PC-9 (cell line): ENCODE measurements at regions of chr1 and their contacts with region 1.

Region 1: DNA sequence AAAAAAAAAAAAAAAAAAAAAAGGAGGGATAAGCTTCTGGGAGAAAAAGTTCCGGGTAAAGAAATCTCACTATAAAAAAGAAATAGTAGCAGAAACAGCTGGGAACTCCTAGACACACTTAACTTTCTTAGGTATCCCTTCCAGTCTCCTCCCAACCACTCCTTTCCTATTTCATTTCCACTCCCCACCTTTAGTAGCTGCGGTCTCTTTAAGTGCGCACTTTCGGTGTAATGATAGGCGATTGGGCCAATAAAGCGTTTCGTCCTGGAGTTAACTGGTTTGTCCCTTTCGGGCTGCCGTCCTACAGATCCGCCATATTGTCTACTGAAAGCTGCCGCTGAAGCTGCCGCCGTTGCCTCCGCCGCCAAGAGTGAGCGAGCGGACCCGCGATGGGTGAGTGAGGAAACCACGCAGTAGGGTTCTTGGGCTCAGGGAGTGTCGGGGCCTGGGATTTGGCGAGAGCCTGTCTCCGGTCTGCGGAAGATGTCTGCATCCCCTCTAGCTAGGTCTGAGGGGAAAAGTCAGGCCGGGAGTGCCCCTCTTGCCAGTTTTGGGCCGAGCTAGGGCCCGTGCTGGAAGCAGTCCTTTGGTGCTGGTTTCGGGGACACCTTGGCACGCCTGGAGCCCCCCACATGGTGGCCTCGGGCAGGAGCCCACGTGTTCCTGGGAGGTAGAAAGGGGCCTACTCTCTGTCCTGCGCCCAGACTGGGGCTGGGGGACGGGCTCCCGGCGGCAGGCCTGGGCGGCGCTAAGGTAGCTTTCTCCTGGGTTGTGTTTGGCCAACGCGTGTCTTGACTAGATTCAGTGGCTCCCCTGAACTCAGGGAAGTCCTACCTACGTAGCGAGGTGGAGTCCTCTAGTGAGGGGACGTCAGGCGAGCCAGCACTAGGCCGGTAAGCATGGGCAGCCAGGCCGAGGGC is at the start of gene KPNA6:
- DNase-seq: peak; percentile 87 to 91
- H3K4me3 ChIP-seq: peak within 1 kb of the TSS; percentile 82
- H3K27ac ChIP-seq: peak within 1 kb of the TSS; percentile 81
- H3K4me1 ChIP-seq: 0 out of 2 replicates have a peak, but pooled peaks cover 5% of the 10 kb centered on the region
- H3K27me3 ChIP-seq: no peaks in the 10 kb centered on the region
- CTCF ChIP-seq: no peak
- total RNA-seq, gene KPNA6: 76.0 and 89.9 TPM in 2 replicates

Region 2: DNA sequence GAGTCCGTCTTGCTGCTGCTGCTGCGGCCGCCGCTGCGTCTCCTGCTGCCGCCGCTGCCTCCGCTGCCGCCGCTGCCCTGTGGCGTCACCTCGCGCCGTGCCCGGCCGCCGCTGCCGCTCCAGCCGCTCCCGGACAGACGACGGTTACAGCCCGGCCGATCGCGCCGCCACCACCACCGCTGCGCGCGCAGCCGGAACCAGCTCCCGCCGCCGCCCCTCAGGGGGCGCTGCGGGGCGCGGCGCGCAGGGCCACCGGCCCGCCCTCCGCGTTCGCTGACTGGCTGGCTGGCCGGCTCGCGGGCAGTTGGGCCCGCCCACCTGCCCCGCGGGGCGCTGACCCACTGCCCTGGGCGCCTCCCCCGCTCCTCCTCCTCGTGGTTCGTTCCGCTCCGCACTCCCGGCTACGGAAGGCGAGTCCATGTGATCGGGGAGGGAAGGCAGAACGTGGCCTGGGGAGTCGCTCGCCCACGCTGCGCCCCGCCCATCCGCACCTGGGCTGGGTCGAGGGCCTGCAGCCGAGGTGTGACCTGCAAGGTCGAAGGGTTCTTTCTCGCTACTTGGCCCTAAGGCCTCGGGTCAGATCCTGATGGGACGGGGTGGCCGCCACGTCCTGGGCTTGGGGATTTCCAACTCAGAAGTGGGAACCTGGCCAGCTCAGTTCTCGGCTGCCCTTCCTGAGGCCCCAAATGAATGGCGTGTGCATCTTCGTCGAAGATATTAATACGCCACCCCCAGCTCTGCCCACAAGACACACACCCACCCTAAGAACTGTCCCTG is 169.6 kb before region 1 on chr1 and contains the start of gene PTP4A2:
- CTCF ChIA-PET with region 1: interaction called, 3 read pairs
- POLR2A ChIA-PET with region 1: interaction called, 12 read pairs
- intact Hi-C with region 1: no loop called
- DNase-seq: peak; percentile 96 to 97
- H3K4me3 ChIP-seq: peak within 1 kb of the TSS; percentile 86
- H3K27ac ChIP-seq: peak within 1 kb of the TSS; percentile 95
- H3K4me1 ChIP-seq: peaks cover 78% of the 10 kb centered on the region
- H3K27me3 ChIP-seq: no peaks in the 10 kb centered on the region
- CTCF ChIP-seq: no peak; the same call in 1 of the 2 replicates
- total RNA-seq, gene PTP4A2: 149 and 201 TPM in 2 replicates

Region 3: GRCh38 chr1:31970873-31971272 is 137.1 kb before region 1 on chr1:
- CTCF ChIA-PET with region 1: no interaction called
- POLR2A ChIA-PET with region 1: interaction called, 18 read pairs
- intact Hi-C with region 1: no loop called
- DNase-seq: no peak
- H3K4me3 ChIP-seq: no peak overlapping the region
- H3K27ac ChIP-seq: no peak overlapping the region
- H3K4me1 ChIP-seq: no peaks in the 10 kb centered on the region
- H3K27me3 ChIP-seq: no peaks in the 10 kb centered on the region
- CTCF ChIP-seq: no peak

Region 4: DNA sequence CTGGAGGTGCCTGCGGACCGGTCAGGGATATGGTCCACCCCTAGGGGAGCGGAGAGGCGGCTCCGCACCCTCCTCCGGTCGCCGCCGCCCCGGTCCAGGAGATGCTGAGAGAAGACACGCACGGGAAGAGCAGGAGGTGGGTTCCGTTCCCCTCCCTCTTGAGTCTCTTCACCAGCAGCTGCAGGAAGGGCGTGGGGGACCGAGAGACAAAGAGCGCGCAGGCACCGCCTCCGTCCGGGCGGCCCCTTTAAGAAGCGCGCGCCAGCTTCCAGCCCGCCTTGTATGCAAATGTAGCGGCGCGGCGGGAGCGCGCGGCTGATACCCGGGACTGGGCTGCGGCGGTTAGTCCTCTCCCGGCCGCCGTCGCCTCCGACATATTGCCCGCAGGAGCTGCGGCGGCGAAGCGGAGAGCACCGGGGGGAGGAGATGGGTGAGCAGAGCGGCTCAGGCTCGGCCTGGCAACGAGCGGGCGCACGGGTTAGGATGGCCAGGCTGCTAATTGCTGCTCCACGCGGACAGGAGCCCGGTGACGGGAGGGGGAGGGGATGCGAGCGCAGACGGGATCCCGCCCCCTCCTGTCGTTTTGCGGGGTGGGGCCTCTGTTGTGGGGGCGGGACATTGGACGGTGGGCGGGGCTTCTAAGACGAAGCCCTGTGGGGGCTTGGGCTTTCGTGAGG is 35.2 kb before region 1 on chr1 and contains the start of gene TMEM39B:
- CTCF ChIA-PET with region 1: interaction called, 16 read pairs
- POLR2A ChIA-PET with region 1: no interaction called
- intact Hi-C with region 1: loop called (anchors 5 kb)
- DNase-seq: peak; percentile 81 to 90
- H3K4me3 ChIP-seq: peak within 1 kb of the TSS; percentile 67
- H3K27ac ChIP-seq: peak within 1 kb of the TSS; percentile 25; the same call in 1 of the 2 replicates
- H3K4me1 ChIP-seq: peaks cover 16% of the 10 kb centered on the region
- H3K27me3 ChIP-seq: no peaks in the 10 kb centered on the region
- CTCF ChIP-seq: no peak
- total RNA-seq, gene TMEM39B: 26.0 and 27.2 TPM in 2 replicates

Region 5: DNA sequence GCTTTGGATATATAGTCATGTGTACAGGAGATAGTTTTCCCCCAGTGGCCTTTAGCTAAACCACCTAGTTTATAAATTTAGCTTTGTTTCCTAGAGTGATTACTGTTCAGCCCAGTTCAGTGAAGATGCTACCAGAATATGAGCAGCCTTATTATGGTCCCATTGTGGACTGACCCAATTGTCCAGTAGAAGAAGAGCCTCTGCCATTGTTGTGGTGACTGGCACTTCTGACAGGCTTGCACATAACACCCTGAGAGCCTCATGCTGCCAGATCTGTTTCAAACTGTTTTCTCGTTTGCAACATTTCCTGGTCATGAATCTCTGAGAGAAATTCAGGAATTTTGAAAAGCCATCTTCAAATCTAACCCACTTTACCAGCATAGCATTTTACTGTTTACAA is 20.5 kb after region 1 on chr1:
- CTCF ChIA-PET with region 1: no interaction called
- POLR2A ChIA-PET with region 1: no interaction called
- intact Hi-C with region 1: loop called (anchors 1 kb)
- DNase-seq: no peak
- H3K4me3 ChIP-seq: no peak overlapping the region
- H3K27ac ChIP-seq: no peak overlapping the region
- H3K4me1 ChIP-seq: peaks cover 11% of the 10 kb centered on the region; the same call in 1 of the 2 replicates
- H3K27me3 ChIP-seq: no peaks in the 10 kb centered on the region
- CTCF ChIP-seq: no peak

Region 6: GRCh38 chr1:32179443-32180185 is 71.6 kb after region 1 on chr1 and contains the start of gene TXLNA:
- CTCF ChIA-PET with region 1: no interaction called
- POLR2A ChIA-PET with region 1: no interaction called
- intact Hi-C with region 1: loop called (anchors 2 kb)
- DNase-seq: peak; percentile 86 to 91
- H3K4me3 ChIP-seq: peak within 1 kb of the TSS; percentile 93
- H3K27ac ChIP-seq: peak within 1 kb of the TSS; percentile 69
- H3K4me1 ChIP-seq: peaks cover 29% of the 10 kb centered on the region
- H3K27me3 ChIP-seq: no peaks in the 10 kb centered on the region
- CTCF ChIP-seq: no peak
- total RNA-seq, gene TXLNA: 32.0 and 45.8 TPM in 2 replicates

Region 7: GRCh38 chr1:32215629-32216480 is 107.9 kb after region 1 on chr1:
- CTCF ChIA-PET with region 1: no interaction called
- POLR2A ChIA-PET with region 1: no interaction called
- intact Hi-C with region 1: no loop called
- DNase-seq: peak in 1 of 2 experiments; percentile 61
- H3K4me3 ChIP-seq: no peak overlapping the region
- H3K27ac ChIP-seq: no peak overlapping the region
- H3K4me1 ChIP-seq: peaks cover 9% of the 10 kb centered on the region
- H3K27me3 ChIP-seq: no peaks in the 10 kb centered on the region
- CTCF ChIP-seq: peak; percentile 87